ENCODE measurements at regions of chr5 and their contacts with region 1.

Region 1: DNA sequence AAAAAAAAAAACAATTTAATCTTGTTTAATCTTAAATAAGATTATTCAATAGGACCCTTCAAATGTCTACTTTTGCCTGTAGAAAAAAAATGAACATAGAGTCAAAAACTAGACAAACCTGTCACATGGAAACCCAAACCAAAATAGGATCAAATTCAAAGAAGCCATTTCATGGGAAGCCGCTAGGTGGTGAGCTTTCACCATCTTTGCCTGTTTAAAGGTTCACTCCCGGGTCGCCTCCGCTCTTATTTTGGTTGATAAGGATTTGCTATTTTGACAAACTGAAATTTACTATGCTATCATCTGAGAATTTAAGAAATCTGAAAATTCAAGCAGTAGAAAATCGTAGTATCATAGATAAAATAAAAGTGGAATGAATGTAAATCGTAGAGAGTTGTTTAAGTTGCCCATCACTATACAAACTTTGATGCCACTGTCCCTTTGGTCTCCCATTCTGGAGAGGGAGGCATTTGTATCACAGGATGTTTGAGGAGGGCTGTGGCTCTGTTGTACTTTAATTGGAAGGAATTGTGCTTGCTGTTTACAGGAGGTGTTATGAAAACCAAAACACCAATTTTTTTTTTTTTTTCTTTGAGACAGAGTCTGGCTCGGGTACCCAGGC is 43.5 kb upstream of the DNAH5 start:
- DNase-seq: peak; percentile 69 to 87
- H3K4me3 ChIP-seq: no peak overlapping the region
- H3K27ac ChIP-seq: peak overlapping the region; percentile 25; the same call in 1 of the 2 replicates
- H3K4me1 ChIP-seq: peaks cover 30% of the 10 kb centered on the region
- H3K27me3 ChIP-seq: no peaks in the 10 kb centered on the region
- CTCF ChIP-seq: peak; percentile 97

Region 2: DNA sequence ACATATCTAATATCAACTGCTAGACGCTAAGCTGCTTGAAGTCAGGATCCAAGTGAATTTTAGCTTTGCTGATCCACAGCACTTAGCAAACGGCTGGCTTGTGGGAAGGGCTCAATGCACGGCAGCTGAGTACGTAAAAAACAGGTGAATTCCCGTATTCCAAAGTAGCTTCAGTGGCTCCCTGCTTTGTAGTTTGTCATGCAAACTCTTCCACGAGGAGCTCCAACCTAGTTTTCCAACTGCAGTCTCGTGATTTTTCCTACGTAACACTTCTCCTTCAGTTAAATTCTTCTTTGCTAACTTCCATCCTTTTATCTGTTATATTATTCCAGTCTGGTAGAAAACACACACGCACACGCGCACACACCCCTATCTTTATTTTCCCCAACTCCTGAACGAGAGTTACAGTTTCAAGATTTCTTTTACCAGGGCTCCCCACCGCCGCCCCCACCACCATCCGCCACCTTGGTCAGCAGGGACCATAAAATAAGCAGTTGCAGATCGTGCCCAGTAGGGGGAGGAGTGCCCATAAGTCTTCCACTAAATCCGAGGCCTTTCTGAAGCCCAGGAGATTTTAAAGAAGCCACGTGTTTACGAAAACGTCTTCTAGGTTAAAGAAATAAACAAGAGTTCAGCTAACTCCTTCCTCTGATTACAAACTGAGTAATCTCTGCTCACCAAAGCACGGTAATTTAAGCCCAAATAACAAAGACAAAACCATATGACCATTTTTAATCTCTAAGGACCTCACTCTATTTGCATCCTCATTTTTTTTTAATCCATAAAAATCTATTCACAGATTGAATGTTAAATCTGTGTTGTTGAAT is 120.4 kb after region 1 on chr5:
- CTCF ChIA-PET with region 1: interaction called, 8 read pairs
- POLR2A ChIA-PET with region 1: no interaction called
- intact Hi-C with region 1: loop called (anchors 1 kb)
- DNase-seq: peak in 1 of 2 experiments; percentile 81
- H3K4me3 ChIP-seq: no peak overlapping the region
- H3K27ac ChIP-seq: peak overlapping the region; percentile 22; the same call in 1 of the 2 replicates
- H3K4me1 ChIP-seq: peaks cover 10% of the 10 kb centered on the region
- H3K27me3 ChIP-seq: no peaks in the 10 kb centered on the region
- CTCF ChIP-seq: peak; percentile 59

Region 3: GRCh38 chr5:14225173-14225834 is 237.3 kb after region 1 on chr5:
- CTCF ChIA-PET with region 1: no interaction called
- POLR2A ChIA-PET with region 1: no interaction called
- intact Hi-C with region 1: loop called (anchors 5 kb)
- DNase-seq: peak in 1 of 2 experiments; percentile 43
- H3K4me3 ChIP-seq: no peak overlapping the region
- H3K27ac ChIP-seq: peak overlapping the region; percentile 33; the same call in 1 of the 2 replicates
- H3K4me1 ChIP-seq: peaks cover 24% of the 10 kb centered on the region
- H3K27me3 ChIP-seq: no peaks in the 10 kb centered on the region
- CTCF ChIP-seq: no peak

Region 4: GRCh38 chr5:14364576-14365472 is 376.9 kb after region 1 on chr5:
- CTCF ChIA-PET with region 1: no interaction called
- POLR2A ChIA-PET with region 1: no interaction called
- intact Hi-C with region 1: loop called (anchors 1 kb)
- DNase-seq: peak in 1 of 2 experiments; percentile 53
- H3K4me3 ChIP-seq: no peak overlapping the region
- H3K27ac ChIP-seq: no peak overlapping the region
- H3K4me1 ChIP-seq: peaks cover 19% of the 10 kb centered on the region
- H3K27me3 ChIP-seq: no peaks in the 10 kb centered on the region
- CTCF ChIP-seq: peak; percentile 67

Region 5: DNA sequence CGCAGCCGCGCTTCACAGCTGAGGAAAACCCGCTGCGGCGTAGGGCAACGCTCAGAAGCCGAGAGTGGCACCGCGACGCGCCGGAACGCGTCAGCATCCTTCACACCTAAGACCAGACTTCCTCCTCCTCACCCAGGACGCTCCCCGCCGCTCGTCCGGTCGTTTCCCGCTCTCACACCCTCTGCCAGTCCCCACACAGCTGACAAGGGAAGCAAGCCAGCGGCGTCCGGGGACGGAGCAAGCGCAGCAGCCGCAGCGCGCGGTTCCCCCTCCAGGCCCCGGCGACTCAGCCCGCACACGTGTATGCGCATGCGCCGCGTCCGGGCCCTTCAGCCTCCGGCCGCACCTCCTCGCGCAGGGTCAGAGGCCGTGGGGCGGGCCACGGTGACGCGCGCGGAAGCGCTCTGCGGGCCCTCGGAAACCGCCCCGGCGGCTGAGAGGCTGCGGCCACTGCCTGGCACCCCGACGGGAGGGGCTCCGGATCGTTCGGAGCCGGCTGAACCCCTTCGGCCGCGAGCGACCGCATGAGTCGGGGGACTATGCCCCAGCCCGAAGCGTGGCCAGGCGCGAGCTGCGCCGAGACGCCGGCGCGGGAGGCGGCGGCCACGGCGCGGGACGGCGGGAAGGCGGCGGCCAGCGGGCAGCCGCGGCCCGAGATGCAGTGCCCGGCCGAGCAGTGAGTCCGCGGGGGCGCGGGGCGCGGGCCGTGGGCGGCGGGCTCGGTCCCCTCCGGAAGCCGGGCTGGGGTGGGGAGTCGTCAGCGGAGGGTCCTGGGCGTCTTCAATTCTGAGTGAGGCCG is 676.5 kb after region 1 on chr5 and contains the start of gene OTULIN:
- CTCF ChIA-PET with region 1: no interaction called
- POLR2A ChIA-PET with region 1: no interaction called
- intact Hi-C with region 1: loop called (anchors 5 kb)
- DNase-seq: peak; percentile 71 to 98
- H3K4me3 ChIP-seq: peak within 1 kb of the TSS; percentile 73
- H3K27ac ChIP-seq: peak within 1 kb of the TSS; percentile 21
- H3K4me1 ChIP-seq: peaks cover 28% of the 10 kb centered on the region
- H3K27me3 ChIP-seq: no peaks in the 10 kb centered on the region
- CTCF ChIP-seq: no peak
- total RNA-seq, gene OTULIN: 77.2 and 79.1 TPM in 2 replicates